ENCODE measurements at regions of chr3 and their contacts with region 1.

Region 1: GRCh38 chr3:16828815-16829214 is 55.9 kb upstream of the PLCL2 start:
- DNase-seq: peak; percentile 75
- H3K4me3 Mint-ChIP-seq: no peak overlapping the region
- H3K27ac Mint-ChIP-seq: no peak overlapping the region
- H3K4me1 Mint-ChIP-seq: peaks cover 18% of the 10 kb centered on the region
- H3K27me3 Mint-ChIP-seq: no peaks in the 10 kb centered on the region

Region 2: DNA sequence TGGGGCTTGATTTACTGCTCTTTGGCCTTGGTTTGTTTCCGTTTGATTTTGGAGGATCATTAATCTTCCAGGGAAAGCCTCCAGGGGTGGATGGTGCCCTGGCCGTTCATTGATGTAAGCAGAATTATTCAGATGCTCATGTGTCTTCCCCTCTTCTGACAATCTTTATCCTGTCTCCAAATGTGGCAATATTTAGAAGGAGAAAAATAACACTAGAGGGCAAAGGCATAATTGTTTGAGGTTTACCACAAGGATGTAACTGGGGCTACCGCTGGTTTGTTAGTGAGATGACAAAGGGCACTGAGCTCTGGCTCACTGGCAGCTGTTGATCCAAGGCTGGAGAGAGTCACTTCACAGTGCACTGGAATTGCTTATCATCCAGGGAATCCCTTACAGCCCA is 37.8 kb after region 1 on chr3:
- CTCF ChIA-PET with region 1: no interaction called
- intact Hi-C with region 1: no loop called
- DNase-seq: no peak
- H3K4me3 Mint-ChIP-seq: no peak overlapping the region
- H3K27ac Mint-ChIP-seq: no peak overlapping the region
- H3K4me1 Mint-ChIP-seq: peaks cover 15% of the 10 kb centered on the region
- H3K27me3 Mint-ChIP-seq: no peaks in the 10 kb centered on the region

Region 3: DNA sequence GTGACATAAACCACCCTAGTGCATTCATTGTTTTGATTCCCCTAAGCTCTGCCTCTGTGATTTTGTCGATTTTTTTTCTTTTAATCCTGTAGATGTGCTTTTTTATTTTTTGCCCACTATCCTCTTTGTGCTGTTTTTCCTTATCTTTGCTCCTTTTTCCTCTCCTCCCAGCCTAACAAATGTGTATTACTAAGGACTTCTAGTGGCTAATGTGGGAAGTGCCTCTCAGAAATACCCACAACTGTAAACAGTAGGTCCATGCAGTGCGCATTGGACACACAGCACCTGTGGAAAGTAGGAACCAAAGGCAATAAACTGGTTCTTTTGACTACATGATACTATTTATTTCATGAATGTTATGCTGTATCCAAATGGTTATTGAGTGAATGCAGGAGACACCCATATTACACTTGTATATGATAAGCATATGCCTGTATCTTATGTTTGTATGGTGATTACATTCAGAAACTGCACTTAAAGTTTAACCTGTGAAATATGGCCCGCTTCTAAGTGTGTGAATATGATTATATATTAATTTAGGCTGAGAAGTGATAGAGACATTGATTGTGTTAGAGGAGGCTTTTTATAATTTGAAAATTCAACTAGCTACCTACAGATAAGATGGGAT is 203.7 kb after region 1 on chr3:
- CTCF ChIA-PET with region 1: interaction called, 5 read pairs
- intact Hi-C with region 1: loop called (anchors 2 kb)
- DNase-seq: no peak
- H3K4me3 Mint-ChIP-seq: no peak overlapping the region
- H3K27ac Mint-ChIP-seq: no peak overlapping the region
- H3K4me1 Mint-ChIP-seq: peaks cover 75% of the 10 kb centered on the region
- H3K27me3 Mint-ChIP-seq: no peaks in the 10 kb centered on the region

Region 4: GRCh38 chr3:17119201-17120077 is 290.6 kb after region 1 on chr3:
- CTCF ChIA-PET with region 1: no interaction called
- intact Hi-C with region 1: no loop called
- DNase-seq: no peak
- H3K4me3 Mint-ChIP-seq: no peak overlapping the region
- H3K27ac Mint-ChIP-seq: no peak overlapping the region
- H3K4me1 Mint-ChIP-seq: no peaks in the 10 kb centered on the region
- H3K27me3 Mint-ChIP-seq: no peaks in the 10 kb centered on the region

Measured in activated naive CD4-positive, alpha-beta T cell treated with anti-CD3 and anti-CD28 coated beads for 36 hours (primary cell).